ENCODE measurements at regions of chr6 and their contacts with region 1.

Region 1: DNA sequence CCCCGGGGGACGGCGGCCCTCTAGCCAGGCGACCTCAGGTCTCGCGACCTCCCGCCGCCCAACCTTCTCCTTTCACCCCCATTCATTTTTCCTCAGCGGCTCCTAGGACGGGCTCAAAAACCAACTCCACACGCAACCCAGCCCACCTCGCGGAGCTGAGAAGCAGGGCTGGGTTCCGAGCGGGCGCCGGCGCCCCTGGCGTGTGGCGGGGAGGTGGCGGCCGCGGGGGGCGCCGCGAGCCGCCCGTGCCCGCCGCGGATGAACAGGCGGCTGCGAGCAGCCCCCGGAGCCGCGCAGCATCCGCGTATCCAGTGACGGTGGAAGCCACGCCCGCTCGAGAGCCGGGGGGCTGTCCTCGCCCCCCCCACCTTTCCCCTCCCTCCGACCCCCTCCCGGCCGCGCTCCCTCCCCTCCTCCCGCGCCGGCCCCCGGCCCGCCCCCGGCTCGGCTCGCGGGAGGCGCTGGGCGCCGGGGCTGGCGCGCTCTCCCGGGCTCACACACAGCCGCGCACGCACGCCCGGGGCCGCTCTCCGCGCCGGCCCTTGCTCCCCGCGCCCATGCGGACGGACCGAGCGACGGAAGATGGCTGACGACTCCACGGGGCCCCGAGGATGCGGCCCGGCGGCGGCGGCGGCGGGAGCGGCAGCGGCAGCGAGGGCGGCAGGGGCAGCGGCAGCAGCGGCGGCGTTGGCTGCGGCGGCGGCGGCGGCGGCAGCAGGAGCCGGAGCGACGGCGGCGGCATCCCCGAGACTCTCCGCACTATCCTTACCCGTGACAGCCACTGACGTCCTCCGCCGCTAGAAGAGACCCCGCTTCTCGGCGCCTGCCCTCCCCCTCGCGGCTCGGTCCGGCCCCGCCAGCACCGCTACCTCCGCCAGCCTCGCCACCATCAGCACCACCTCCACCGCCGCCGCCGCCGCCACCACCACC is at the start of gene SOBP:
- DNase-seq: peak; percentile 84
- total RNA-seq, gene SOBP: 28.7 TPM

Region 2: DNA sequence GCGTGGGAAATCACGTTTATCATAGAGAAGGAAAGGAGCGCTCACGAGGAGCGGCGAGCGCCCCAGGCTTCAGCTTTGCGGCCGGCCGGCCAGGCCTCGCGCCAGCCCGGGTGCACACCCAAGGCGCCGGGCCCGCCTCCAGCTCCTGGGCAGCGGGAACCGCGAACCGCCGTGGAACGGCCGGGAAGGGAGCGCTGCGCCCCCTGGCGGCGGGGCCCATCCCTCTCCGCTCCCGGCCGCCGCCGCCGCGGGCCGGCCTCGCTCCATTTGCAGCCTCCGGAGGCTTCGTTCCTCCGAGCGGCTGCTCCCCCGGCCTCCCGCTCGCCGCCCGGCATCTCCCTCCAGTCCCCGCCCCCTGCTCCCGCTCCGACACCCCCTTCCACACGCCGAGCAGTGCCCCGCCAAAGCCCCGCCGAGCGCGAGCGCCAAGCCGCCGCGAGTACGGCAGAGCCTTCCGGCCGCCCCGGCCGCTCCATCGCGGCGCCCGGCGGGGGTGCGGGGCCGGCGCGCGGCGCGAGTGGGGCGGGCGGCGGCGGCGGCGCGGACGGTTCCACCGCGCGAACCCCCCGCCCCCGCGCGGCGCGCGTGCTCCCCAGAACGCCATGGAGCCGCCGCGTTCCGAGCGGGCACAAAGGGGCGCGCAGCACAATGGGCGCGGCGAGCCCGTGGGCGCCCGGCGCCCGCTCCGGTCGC is 375.5 kb before region 1 on chr6:
- intact Hi-C with region 1: loop called (anchors 10 kb)
- DNase-seq: peak; percentile 91

Region 3: GRCh38 chr6:107459283-107460082 is 30.4 kb before region 1 on chr6 and contains the start of gene PDSS2:
- intact Hi-C with region 1: loop called (anchors 2 kb)
- DNase-seq: peak; percentile 99
- total RNA-seq, gene PDSS2: 16.8 TPM

Region 4: GRCh38 chr6:107540465-107540857 is 50.6 kb after region 1 on chr6:
- intact Hi-C with region 1: loop called (anchors 5 kb)
- DNase-seq: no peak

Region 5: GRCh38 chr6:107607116-107607515 is 117.2 kb after region 1 on chr6:
- intact Hi-C with region 1: no loop called
- DNase-seq: no peak

Region 6: GRCh38 chr6:107657755-107658461 is 168.0 kb after region 1 on chr6:
- intact Hi-C with region 1: loop called (anchors 5 kb)
- DNase-seq: no peak